CD8-positive, alpha-beta T cell (primary cell): ENCODE measurements at regions of chr17 and their contacts with region 1.

Region 1: GRCh38 chr17:77429919-77430752 is 289.4 kb downstream of the SEC14L1 start:
- DNase-seq: peak; percentile 73 to 90 (median 85)
- ATAC-seq: peak; percentile 32
- H3K4me3 ChIP-seq: no peak overlapping the region
- H3K4me3 Mint-ChIP-seq: peak overlapping the region; percentile 32
- H3K27ac ChIP-seq: peak overlapping the region in 1 of 2 experiments; percentile 14
- H3K27ac Mint-ChIP-seq: peak overlapping the region; percentile 97
- H3K4me1 ChIP-seq: peaks cover 84% of the 10 kb centered on the region
- H3K4me1 Mint-ChIP-seq: peaks cover 85% of the 10 kb centered on the region
- H3K27me3 ChIP-seq: no peaks in the 10 kb centered on the region
- H3K27me3 Mint-ChIP-seq: no peaks in the 10 kb centered on the region
- CTCF ChIP-seq: peak; percentile 73

Region 2: DNA sequence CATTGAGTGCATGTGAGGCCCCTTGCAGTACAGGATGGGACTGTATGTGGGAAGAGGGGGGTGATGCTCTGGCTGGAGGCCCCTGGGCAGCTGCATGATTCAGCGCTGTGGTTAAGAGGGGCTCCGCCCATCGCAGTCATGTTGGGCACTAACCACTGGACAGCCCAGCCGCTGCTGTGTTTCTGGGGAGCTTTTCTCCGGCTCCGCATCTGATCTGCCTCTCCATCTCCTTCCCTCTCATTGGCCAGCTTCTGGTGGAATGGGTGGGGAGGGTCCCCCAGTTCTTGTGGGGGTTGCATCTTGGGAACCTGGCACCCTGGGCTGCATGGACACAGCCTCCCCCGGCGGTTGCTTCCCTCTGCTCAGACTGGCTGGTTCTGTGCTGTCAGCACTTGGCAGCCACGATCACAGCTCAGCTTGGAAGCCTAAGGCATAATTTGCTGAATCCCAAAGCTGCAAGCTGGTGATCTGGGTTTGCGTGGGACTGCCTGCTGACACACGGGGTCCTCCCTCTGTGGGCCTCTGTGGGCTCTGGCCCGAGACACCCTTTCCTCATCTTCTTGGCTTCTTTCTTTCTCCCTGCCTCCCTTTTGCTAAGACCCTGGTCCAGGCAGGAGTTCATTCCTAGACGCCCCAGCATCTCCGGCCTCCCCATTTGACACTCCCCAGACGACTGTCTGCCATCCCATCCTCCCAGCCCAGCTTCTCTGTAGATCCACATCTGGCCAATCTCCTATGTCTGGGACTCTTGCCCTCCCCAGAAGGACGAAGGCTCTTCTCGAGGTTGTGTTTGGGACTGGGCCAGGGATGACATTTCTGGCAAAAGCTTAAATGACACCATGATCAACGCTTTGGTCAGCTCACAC is 121.0 kb before region 1 on chr17:
- CTCF ChIA-PET with region 1: no interaction called
- POLR2A ChIA-PET with region 1: no interaction called
- intact Hi-C with region 1: no loop called
- DNase-seq: no peak
- ATAC-seq: no peak
- H3K4me3 ChIP-seq: no peak overlapping the region
- H3K4me3 Mint-ChIP-seq: no peak overlapping the region
- H3K27ac ChIP-seq: no peak overlapping the region
- H3K27ac Mint-ChIP-seq: no peak overlapping the region
- H3K4me1 ChIP-seq: no peaks in the 10 kb centered on the region
- H3K4me1 Mint-ChIP-seq: no peaks in the 10 kb centered on the region
- H3K27me3 ChIP-seq: no peaks in the 10 kb centered on the region
- H3K27me3 Mint-ChIP-seq: no peaks in the 10 kb centered on the region
- CTCF ChIP-seq: no peak

Region 3: DNA sequence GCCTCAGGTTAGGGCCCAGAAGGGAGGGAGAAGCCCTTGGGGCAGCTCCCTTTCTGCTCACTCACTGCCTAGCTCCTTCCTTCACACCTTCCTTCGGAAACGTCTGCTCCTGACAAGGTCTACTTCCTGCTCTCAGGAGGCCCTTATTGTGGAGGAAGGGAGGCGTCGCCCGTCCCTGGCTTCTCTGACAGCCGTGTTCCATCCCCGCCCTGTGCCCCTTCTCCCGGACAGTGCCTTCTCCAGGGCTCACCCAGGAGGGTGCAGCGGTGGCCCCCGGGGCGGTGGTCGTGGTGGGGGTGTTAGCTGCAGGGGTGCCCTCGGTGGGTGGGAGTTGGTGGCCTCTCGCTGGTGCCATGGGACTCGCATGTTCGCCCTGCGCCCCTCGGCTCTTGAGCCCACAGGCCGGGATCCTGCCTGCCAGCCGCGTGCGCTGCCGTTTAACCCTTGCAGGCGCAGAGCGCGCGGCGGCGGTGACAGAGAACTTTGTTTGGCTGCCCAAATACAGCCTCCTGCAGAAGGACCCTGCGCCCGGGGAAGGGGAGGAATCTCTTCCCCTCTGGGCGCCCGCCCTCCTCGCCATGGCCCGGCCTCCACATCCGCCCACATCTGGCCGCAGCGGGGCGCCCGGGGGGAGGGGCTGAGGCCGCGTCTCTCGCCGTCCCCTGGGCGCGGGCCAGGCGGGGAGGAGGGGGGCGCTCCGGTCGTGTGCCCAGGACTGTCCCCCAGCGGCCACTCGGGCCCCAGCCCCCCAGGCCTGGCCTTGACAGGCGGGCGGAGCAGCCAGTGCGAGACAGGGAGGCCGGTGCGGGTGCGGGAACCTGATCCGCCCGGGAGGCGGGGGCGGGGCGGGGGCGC is 57.5 kb before region 1 on chr17:
- CTCF ChIA-PET with region 1: interaction called, 23 read pairs
- POLR2A ChIA-PET with region 1: interaction called, 35 read pairs
- intact Hi-C with region 1: no loop called
- DNase-seq: peak; percentile 21 to 84 (median 61)
- ATAC-seq: peak; percentile 33
- H3K4me3 ChIP-seq: peak overlapping the region; percentile 68 to 99
- H3K4me3 Mint-ChIP-seq: peak overlapping the region; percentile 81
- H3K27ac ChIP-seq: peak overlapping the region; percentile 66 to 81
- H3K27ac Mint-ChIP-seq: peak overlapping the region; percentile 89
- H3K4me1 ChIP-seq: peaks cover 59% of the 10 kb centered on the region
- H3K4me1 Mint-ChIP-seq: peaks cover 56% of the 10 kb centered on the region
- H3K27me3 ChIP-seq: no peaks in the 10 kb centered on the region
- H3K27me3 Mint-ChIP-seq: no peaks in the 10 kb centered on the region
- CTCF ChIP-seq: no peak

Region 4: DNA sequence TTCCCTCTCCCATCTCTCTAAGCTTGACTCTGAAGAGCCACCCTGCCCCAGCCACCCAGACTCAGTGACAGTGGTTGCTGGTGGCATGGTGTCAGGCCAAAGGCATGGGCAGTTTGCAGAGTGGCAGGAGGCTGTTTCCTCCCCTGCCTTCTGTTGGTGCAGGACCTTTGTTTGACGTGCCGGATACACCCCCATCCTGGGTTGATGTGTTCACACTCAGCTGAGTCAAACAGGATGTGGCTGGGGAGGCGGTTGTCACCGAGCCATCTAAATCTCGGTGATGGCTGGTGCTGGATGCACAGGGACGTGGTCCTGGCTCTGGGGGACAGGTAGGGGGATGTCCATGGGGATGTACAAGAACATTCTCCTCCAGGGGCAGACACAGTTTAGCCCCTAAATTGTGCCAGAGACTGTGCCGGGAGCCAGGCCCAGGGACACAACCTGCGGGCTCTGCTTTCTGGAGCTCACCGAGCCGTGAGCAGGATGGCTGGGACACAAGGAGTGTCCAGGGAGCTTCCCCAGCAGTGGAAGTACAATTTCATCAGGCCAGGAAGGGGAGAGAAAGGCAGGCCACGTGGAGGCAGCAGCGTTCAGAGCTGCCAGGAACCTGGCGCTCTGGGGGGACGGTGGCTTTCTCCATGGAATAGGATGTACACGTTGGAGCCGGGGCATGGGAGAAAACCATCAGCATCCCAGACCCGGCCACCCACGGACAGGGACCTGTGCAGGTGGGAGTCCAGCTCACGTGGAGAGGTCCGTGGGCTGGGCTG is 25.1 kb before region 1 on chr17:
- CTCF ChIA-PET with region 1: interaction called, 70 read pairs
- POLR2A ChIA-PET with region 1: interaction called, 35 read pairs
- intact Hi-C with region 1: loop called (anchors 1 to 2 kb)
- DNase-seq: peak; percentile 62 to 94 (median 88)
- ATAC-seq: peak; percentile 69
- H3K4me3 ChIP-seq: peak overlapping the region; percentile 58 to 60
- H3K4me3 Mint-ChIP-seq: peak overlapping the region; percentile 93
- H3K27ac ChIP-seq: peak overlapping the region; percentile 65 to 76
- H3K27ac Mint-ChIP-seq: peak overlapping the region; percentile 99
- H3K4me1 ChIP-seq: peaks cover 96% of the 10 kb centered on the region
- H3K4me1 Mint-ChIP-seq: peaks cover 87% of the 10 kb centered on the region
- H3K27me3 ChIP-seq: no peaks in the 10 kb centered on the region
- H3K27me3 Mint-ChIP-seq: no peaks in the 10 kb centered on the region
- CTCF ChIP-seq: no peak

Region 5: DNA sequence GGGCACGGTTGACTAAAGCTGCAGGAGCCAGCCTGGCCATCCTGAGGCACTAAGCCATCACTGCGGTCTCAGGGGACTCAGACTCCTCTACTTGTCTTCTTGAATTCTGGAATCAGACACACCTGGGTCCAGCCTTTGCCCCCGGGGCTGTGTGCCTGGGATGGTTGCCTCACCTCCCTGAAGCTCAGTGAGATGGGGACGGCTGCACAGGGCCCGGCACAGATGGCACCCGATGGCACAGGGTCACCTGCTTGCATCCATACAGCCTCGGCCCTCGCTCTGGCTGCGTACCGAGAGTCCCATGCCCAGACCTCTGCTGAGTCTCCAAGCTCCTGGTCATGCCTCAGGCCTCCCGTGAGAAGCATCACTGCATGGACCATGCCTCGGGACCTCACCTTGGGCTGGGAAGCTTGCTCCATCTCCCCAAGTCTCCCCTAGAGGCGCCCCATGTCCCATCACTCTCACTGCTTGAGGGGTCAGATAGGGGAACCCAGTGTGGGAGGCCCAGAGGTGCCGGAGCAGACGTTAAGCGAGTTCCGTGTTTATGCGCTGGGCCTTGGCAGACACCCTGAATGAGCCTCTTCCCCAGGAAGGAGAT is 26.9 kb after region 1 on chr17:
- CTCF ChIA-PET with region 1: interaction called, 142 read pairs
- POLR2A ChIA-PET with region 1: interaction called, 242 read pairs
- intact Hi-C with region 1: loop called in 1 of 2 experiments (anchors 1 kb)
- DNase-seq: peak in 5 of 9 experiments; percentile 53 to 72 (median 59)
- ATAC-seq: peak; percentile 7
- H3K4me3 ChIP-seq: peak overlapping the region; percentile 93 to 99
- H3K4me3 Mint-ChIP-seq: peak overlapping the region; percentile 94
- H3K27ac ChIP-seq: peak overlapping the region; percentile 80 to 86
- H3K27ac Mint-ChIP-seq: peak overlapping the region; percentile 100
- H3K4me1 ChIP-seq: peaks cover 75% of the 10 kb centered on the region
- H3K4me1 Mint-ChIP-seq: peaks cover 66% of the 10 kb centered on the region
- H3K27me3 ChIP-seq: no peaks in the 10 kb centered on the region
- H3K27me3 Mint-ChIP-seq: no peaks in the 10 kb centered on the region
- CTCF ChIP-seq: no peak

Region 6: GRCh38 chr17:77476931-77477877 is 47.1 kb after region 1 on chr17:
- CTCF ChIA-PET with region 1: interaction called, 32 read pairs
- POLR2A ChIA-PET with region 1: interaction called, 12 read pairs
- intact Hi-C with region 1: loop called (anchors 2 to 5 kb)
- DNase-seq: peak in 2 of 9 experiments; percentile 50 to 58
- ATAC-seq: peak; percentile 21
- H3K4me3 ChIP-seq: no peak overlapping the region
- H3K4me3 Mint-ChIP-seq: peak overlapping the region; percentile 54
- H3K27ac ChIP-seq: peak overlapping the region in 1 of 2 experiments; percentile 11
- H3K27ac Mint-ChIP-seq: peak overlapping the region; percentile 99
- H3K4me1 ChIP-seq: peaks cover 98% of the 10 kb centered on the region
- H3K4me1 Mint-ChIP-seq: peaks cover 86% of the 10 kb centered on the region
- H3K27me3 ChIP-seq: no peaks in the 10 kb centered on the region
- H3K27me3 Mint-ChIP-seq: no peaks in the 10 kb centered on the region
- CTCF ChIP-seq: no peak

Region 7: GRCh38 chr17:77501101-77501566 is 71.0 kb after region 1 on chr17:
- CTCF ChIA-PET with region 1: interaction called, 175 read pairs
- POLR2A ChIA-PET with region 1: interaction called, 31 read pairs
- intact Hi-C with region 1: no loop called
- DNase-seq: peak in 4 of 9 experiments; percentile 33 to 57 (median 48)
- ATAC-seq: no peak
- H3K4me3 ChIP-seq: no peak overlapping the region
- H3K4me3 Mint-ChIP-seq: no peak overlapping the region
- H3K27ac ChIP-seq: no peak overlapping the region
- H3K27ac Mint-ChIP-seq: peak overlapping the region; percentile 49
- H3K4me1 ChIP-seq: no peaks in the 10 kb centered on the region
- H3K4me1 Mint-ChIP-seq: no peaks in the 10 kb centered on the region
- H3K27me3 ChIP-seq: no peaks in the 10 kb centered on the region
- H3K27me3 Mint-ChIP-seq: no peaks in the 10 kb centered on the region
- CTCF ChIP-seq: peak; percentile 53